Sciatic nerve (tissue), 2 donors: ENCODE measurements at regions of chr11 and their contacts with region 1.

Region 1: GRCh38 chr11:19756675-19757475 is 44.2 kb downstream of the NAV2 start:
- DNase-seq: no peak
- ATAC-seq: peak; percentile 55

Region 2: DNA sequence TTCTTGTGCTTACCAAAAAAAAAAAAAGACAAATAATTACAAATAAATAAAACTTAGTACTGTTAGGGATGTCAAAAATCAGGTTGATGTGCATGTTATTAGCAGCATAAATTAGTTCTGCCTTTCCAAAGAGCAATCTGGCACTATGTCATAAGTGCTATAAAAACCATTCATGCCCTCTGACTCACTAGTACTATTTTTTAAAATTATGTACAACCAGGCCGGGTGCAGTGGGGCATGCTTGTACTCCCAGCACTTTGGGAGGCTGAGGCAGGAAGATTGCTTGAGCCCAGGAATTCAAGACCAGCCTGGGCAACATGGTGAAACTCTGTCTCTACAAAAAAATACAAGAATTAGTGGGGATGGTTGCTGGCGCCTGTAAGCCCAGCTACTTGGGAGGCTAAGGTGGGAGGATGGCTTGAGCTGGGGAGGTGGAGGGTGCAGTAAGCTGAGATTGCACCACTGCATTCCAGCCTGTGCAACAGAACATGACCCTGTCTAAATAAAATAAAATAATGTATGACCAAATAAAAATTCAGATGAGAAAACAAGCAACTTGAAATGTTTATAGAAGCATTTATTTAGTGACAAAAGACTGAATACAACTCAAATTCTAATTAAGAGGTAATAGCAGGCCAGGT is 1193.7 kb before region 1 on chr11:
- intact Hi-C with region 1: no loop called
- DNase-seq: no peak
- ATAC-seq: no peak

Region 3: GRCh38 chr11:19903620-19904069 is 146.8 kb after region 1 on chr11:
- intact Hi-C with region 1: loop called (anchors 10 kb)
- DNase-seq: peak; percentile 88
- ATAC-seq: peak; percentile 83

Region 4: GRCh38 chr11:19951558-19952115 is 194.8 kb after region 1 on chr11:
- intact Hi-C with region 1: no loop called
- DNase-seq: no peak
- ATAC-seq: peak; percentile 21